Sigmoid colon (tissue), 7 donors: ENCODE measurements at regions of chr18 and their contacts with region 1.

Region 1: DNA sequence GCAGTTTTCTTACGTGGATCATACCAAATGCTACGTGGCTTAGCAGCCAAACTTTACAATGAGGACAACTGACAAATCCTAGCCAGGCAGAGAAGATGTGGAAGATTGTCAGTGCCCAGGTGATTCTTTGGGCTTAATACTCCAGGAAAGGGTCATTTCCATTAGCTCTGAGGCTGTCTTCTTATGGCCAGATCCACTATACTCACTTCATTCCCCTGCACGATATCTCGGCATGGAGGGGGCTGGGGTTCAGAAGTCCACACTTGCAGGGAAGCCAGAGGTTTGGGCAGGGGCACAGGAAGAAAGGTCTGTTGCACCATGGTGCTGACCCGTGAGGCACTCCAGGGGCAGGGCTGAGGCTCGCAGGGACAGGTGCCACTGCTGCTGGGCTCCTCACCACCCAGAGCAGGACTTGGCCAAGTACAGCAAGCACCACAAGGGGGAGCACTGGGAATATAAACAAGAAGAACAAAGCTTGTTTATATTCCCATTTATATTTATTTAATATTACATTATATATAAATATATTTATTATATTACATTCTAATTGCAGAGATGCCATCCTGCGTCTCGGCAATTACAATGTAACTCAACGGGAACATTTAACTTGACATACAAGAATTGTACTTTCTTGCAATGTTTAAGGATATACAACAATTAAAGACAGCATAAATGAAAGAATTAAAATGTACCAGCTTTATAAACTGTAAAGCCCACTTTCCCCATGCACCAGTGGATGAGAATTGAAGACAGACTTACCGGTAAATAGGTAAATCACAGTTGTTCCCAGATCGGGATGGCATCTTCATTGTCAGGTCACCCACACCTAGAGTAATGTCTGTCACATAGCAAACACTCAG is 27.2 kb downstream of the CLUL1 start:
- DNase-seq: peak; percentile 81
- H3K4me3 ChIP-seq: no peak overlapping the region
- H3K27ac ChIP-seq: no peak overlapping the region
- H3K4me1 ChIP-seq: no peaks in the 10 kb centered on the region
- H3K27me3 ChIP-seq: no peaks in the 10 kb centered on the region
- CTCF ChIP-seq: peak in 3 of 4 experiments; percentile 33 to 76 (median 54)
- EP300 ChIP-seq: no peak
- POLR2A ChIP-seq: no peak

Region 2: GRCh38 chr18:839224-840022 is 215.4 kb after region 1 on chr18:
- intact Hi-C with region 1: loop called (anchors 2 kb)
- DNase-seq: peak; percentile 90
- H3K4me3 ChIP-seq: no peak overlapping the region
- H3K27ac ChIP-seq: no peak overlapping the region
- H3K4me1 ChIP-seq: peaks cover 0 to 4% (median 0%) of the 10 kb centered on the region in 4 donors
- H3K27me3 ChIP-seq: no peaks in the 10 kb centered on the region
- CTCF ChIP-seq: peak; percentile 71 to 98 (median 84)
- EP300 ChIP-seq: no peak
- POLR2A ChIP-seq: no peak